Left ventricle myocardium inferior (tissue), 1 donor: ENCODE measurements at regions of chr1 and their contacts with region 1.

Region 1: DNA sequence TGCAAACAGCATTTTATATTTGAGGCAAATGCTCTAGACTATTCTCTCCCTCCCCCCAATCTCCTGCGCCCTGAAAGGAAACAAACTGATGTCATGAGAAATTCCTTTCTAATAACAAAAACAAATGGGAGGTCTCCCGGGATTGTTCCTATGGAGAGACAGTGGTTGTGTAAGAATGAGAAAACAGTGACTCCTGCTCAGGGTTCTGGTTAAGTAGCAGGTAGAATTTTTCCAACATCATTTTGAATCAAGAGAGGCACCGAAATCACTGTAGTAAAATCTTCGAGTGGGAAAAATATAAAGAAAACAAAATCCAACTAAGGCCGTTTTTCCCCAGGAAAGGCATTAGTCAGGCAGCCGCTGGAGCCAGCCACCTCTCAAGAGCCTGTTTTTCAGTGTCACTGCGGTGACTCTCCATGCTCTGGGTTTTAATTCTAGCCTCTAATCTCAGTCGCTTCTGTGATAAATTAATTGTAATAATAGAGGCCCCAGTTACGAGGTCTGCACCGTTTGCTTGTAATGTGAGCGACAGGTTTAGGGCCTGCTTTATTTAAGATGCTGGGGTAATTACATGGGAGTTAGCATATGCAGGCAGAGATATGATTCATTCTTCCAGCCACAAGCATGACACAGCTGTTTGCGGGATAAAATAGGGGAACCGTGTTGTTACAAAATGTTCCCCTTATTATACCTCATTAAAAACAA is 80.3 kb downstream of the RNF220 start:
- DNase-seq: no peak
- H3K4me3 ChIP-seq: peak overlapping the region; percentile 24
- H3K27ac ChIP-seq: peak overlapping the region; percentile 79
- H3K4me1 ChIP-seq: peaks cover 30% of the 10 kb centered on the region
- H3K27me3 ChIP-seq: no peaks in the 10 kb centered on the region
- CTCF ChIP-seq: no peak

Region 2: GRCh38 chr1:44423591-44424537 is 61.5 kb before region 1 on chr1:
- intact Hi-C with region 1: loop called (anchors 10 kb)
- DNase-seq: peak; percentile 47
- H3K4me3 ChIP-seq: peak overlapping the region; percentile 35
- H3K27ac ChIP-seq: peak overlapping the region; percentile 68
- H3K4me1 ChIP-seq: peaks cover 52% of the 10 kb centered on the region
- H3K27me3 ChIP-seq: peaks cover 47% of the 10 kb centered on the region
- CTCF ChIP-seq: no peak

Region 3: DNA sequence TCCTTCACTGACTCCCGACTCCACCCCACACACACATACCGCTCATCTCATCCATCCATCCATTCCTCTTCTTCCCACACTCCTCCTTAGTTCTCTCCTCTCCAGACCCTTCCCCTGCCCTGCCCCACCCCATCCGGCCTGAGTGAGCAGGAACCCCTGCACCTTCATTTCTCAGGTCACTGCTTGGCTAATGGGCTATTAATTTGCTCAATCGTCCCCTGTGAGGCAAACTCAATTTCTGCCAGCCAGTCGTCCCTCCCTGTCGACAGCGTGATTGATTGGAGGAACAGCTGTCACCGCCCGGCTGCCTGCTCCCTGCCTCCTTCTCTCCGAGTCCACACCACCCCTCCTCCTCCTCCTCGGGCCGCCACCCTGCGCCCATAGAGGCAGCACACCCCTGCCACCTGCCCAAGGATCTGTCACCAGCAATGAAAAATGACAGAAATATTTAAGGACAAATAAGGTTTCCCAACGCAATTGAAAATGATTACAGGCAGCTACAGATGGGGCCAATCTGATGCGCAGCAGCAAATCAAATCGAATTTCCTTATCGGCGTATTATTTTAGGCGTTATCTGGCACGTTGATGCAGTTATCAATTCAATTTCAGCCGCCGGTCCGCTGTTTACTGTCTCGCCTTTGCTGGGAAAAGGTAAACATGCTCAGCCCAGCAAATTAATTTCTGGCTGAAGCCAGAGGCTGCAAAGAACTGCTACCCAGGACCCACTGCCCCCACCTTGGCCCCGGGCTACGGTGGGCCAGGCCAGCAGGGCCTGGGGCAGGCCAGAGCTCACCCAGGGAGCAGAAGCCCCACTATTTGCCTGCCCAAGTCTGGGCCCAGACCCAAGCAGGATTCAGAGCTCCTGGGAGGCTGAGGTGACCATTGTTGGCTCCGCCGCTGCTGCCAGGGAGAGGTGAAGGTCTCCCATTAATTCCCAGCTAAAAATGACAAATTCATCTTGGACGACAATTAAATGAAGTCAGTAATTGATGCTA is 117.5 kb after region 1 on chr1:
- intact Hi-C with region 1: no loop called
- DNase-seq: no peak
- H3K4me3 ChIP-seq: no peak overlapping the region
- H3K27ac ChIP-seq: no peak overlapping the region
- H3K4me1 ChIP-seq: no peaks in the 10 kb centered on the region
- H3K27me3 ChIP-seq: peaks cover 69% of the 10 kb centered on the region
- CTCF ChIP-seq: no peak